Gastrocnemius medialis (tissue), 4 donors: ENCODE measurements at regions of chr6 and their contacts with region 1.

Region 1: GRCh38 chr6:40804905-40805304 is 217.7 kb upstream of the LRFN2 start:
- DNase-seq: no peak
- ATAC-seq: no peak
- H3K4me3 ChIP-seq: no peak overlapping the region
- H3K27ac ChIP-seq: peak overlapping the region; percentile 45 to 76 (median 62)
- H3K4me1 ChIP-seq: peaks cover 23 to 47% of the 10 kb centered on the region in 2 donors
- H3K27me3 ChIP-seq: no peaks in the 10 kb centered on the region
- CTCF ChIP-seq: peak in 4 of 5 experiments; percentile 19 to 46 (median 30)
- POLR2A ChIP-seq: no peak

Region 2: DNA sequence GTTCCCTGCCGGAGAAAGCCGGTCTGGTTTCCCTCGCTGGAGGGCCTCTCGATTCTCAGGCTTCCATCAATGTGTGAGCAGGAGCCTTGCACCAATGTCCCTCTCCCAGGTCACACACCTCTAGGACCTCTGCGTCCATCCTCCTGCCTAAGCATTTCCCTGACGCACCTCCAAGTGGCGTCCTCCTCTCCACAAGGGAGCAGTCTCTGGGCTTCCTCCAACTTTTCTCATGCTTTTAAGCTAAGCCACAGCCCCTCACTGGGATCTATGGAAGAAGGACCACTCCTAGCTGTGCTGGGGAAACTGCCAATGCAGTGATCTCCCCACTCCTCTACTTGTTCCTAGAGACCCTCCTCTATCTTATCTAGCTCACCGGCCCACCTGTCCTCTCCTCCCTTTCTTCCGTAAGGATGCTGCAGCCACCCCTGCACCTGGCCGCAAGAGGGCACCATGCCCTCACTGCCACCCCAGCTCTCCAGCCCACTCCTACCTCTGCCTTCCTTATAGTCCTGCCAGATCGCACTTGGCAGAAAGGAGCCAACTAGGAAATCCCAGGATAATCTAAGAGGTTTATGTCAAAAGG is 476.4 kb before region 1 on chr6:
- in situ Hi-C with region 1: loop called in 1 of 4 experiments (anchors 25 kb)
- intact Hi-C with region 1: no loop called
- DNase-seq: peak in 1 of 2 donors; percentile 34
- ATAC-seq: peak in 1 of 2 donors; percentile 63
- H3K4me3 ChIP-seq: no peak overlapping the region
- H3K27ac ChIP-seq: no peak overlapping the region
- H3K4me1 ChIP-seq: peaks cover 9% of the 10 kb centered on the region in 2 donors
- H3K27me3 ChIP-seq: no peaks in the 10 kb centered on the region
- CTCF ChIP-seq: peak; percentile 46 to 64 (median 61)
- POLR2A ChIP-seq: no peak

Region 3: GRCh38 chr6:40672097-40672496 is 132.8 kb before region 1 on chr6:
- in situ Hi-C with region 1: no loop called
- intact Hi-C with region 1: loop called (anchors 10 kb)
- DNase-seq: no peak
- ATAC-seq: no peak
- H3K4me3 ChIP-seq: no peak overlapping the region
- H3K27ac ChIP-seq: no peak overlapping the region
- H3K4me1 ChIP-seq: no peaks in the 10 kb centered on the region
- H3K27me3 ChIP-seq: no peaks in the 10 kb centered on the region
- CTCF ChIP-seq: no peak
- POLR2A ChIP-seq: no peak

Region 4: DNA sequence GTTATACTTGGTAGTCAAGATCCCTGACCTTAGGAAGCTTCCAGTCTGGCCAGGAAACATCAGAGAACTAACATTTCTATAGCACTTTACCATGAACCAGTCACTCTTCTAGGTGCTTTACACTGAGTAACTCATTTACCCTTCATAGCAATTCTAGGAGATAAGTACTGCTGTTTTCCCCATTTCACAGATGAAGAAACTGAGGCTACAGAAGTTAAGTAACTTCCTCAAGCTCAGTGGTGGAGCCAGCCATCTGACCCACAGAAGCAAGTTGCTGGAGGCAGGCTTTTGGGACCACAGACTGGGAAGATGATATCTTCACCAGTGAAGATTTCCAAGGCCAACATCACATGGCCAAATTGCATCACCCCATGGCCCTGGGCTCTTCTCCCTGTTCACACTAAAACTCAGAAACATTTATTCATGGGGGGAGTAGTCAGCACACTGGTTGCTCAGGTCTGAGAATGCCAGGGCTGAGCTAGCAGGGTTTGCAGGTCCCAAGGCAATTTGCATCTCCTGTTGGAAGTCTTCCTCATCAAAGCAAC is 163.8 kb after region 1 on chr6:
- in situ Hi-C with region 1: no loop called
- intact Hi-C with region 1: no loop called
- DNase-seq: peak in 1 of 2 donors; percentile 19
- ATAC-seq: peak; percentile 30 to 60
- H3K4me3 ChIP-seq: no peak overlapping the region
- H3K27ac ChIP-seq: no peak overlapping the region
- H3K4me1 ChIP-seq: peaks cover 0 to 4% of the 10 kb centered on the region in 2 donors
- H3K27me3 ChIP-seq: no peaks in the 10 kb centered on the region
- CTCF ChIP-seq: no peak
- POLR2A ChIP-seq: no peak